Ovary (tissue), 10 donors: ENCODE measurements at regions of chr15 and their contacts with region 1.

Region 1: DNA sequence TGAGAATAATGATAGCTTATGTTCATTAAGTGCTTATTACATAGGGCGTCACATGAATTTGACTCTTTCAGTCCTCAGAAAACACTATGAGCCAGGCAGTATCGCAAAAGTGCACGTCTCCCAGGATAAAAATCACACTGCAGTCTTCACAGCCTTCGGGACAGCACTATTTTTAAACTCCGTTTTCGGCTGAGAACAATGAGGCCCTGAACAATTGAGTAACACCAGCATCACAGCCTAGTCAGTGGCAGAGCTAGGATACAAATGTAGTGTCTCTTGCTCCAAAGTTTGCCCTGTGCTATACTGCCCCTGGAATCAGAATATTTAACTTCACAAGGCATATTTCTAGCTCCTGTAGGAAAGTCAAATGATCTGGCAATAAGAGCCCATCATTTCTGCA is 852.1 kb upstream of the SEMA6D start:
- DNase-seq: no peak
- H3K4me3 ChIP-seq: no peak overlapping the region
- H3K27ac ChIP-seq: no peak overlapping the region
- H3K4me1 ChIP-seq: no peaks in the 10 kb centered on the region
- H3K27me3 ChIP-seq: no peaks in the 10 kb centered on the region
- CTCF ChIP-seq: no peak
- EP300 ChIP-seq: no peak
- POLR2A ChIP-seq: no peak

Region 2: DNA sequence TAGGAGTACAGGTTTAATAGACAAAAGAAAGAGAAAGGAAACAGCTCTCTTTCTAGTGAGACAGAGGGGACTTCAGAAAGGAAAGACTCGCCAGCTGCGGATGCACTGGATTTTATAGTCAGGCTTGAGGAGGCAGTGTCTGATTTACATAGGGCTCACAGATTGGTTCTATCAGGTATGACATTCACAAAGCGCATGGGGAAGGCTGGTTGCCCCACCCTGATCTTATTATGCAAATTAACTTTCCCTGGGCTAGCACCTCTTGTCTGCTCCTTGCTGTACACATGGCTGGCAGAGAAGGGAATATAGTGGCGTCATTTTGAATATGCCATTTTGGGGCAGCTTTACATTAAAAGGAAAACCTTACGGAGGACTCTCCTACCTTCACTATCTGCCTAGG is 86.3 kb before region 1 on chr15:
- intact Hi-C with region 1: no loop called
- DNase-seq: no peak
- H3K4me3 ChIP-seq: no peak overlapping the region
- H3K27ac ChIP-seq: no peak overlapping the region
- H3K4me1 ChIP-seq: no peaks in the 10 kb centered on the region
- H3K27me3 ChIP-seq: no peaks in the 10 kb centered on the region
- CTCF ChIP-seq: no peak
- EP300 ChIP-seq: no peak
- POLR2A ChIP-seq: no peak

Region 3: GRCh38 chr15:46918462-46919135 is 53.4 kb after region 1 on chr15:
- intact Hi-C with region 1: loop called in 1 of 4 experiments (anchors 10 kb)
- DNase-seq: no peak
- H3K4me3 ChIP-seq: no peak overlapping the region
- H3K27ac ChIP-seq: no peak overlapping the region
- H3K4me1 ChIP-seq: no peaks in the 10 kb centered on the region
- H3K27me3 ChIP-seq: no peaks in the 10 kb centered on the region
- CTCF ChIP-seq: no peak
- EP300 ChIP-seq: no peak
- POLR2A ChIP-seq: no peak

Region 4: GRCh38 chr15:47158573-47158972 is 293.4 kb after region 1 on chr15:
- intact Hi-C with region 1: no loop called
- DNase-seq: no peak
- H3K4me3 ChIP-seq: no peak overlapping the region
- H3K27ac ChIP-seq: no peak overlapping the region
- H3K4me1 ChIP-seq: no peaks in the 10 kb centered on the region
- H3K27me3 ChIP-seq: no peaks in the 10 kb centered on the region
- CTCF ChIP-seq: no peak
- EP300 ChIP-seq: no peak
- POLR2A ChIP-seq: no peak